ENCODE measurements at regions of chr1 and their contacts with region 1.

Region 1: DNA sequence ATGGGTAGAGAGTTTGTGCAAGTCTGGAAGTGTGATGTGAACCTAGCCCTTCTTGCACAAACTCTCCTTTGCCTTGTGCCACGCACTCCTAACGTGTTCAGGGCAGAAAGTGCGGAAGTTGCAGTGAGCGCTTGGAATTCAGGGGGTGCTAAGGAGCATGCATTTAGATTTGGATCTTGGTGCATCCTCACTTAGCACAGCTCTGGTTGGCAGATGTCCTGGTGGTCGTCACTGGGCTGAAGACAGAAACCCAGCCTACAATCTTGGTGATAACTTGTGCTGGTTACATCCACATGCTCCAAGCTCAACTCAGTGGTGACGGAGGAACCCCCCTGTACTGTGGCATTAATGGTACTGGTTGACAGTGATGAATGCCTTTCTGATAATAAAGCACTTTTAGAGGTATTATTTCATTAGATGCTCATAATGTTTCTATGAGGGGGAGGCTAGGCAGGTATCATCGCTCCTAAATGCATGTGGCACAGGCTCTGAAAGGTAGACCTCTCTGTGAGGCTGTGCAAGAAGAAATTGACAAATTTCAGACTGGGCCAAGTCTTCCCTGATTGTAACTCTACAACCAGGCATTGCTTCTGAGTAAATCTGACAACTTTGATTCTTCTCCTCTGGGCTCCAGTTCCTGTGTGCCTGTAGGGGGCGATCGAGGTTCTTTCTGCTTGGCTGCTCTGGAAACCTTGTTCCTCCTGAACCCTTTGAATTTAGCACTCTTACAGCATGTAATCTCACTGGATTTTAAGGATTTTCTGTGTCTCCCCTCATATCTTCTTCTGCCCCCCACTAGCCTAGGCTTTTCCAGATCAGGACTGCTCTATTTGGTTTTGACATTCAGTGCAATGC is 40.6 kb downstream of the MAPKAPK2 start:
- DNase-seq: peak; percentile 31
- H3K4me3 ChIP-seq: no peak overlapping the region
- H3K27ac ChIP-seq: no peak overlapping the region
- H3K4me1 ChIP-seq: no peaks in the 10 kb centered on the region
- H3K27me3 ChIP-seq: no peaks in the 10 kb centered on the region
- CTCF ChIP-seq: peak; percentile 64 to 71
- POLR2A ChIP-seq: no peak

Region 2: GRCh38 chr1:206684478-206685333 is 40.6 kb before region 1 on chr1 and contains the start of gene MAPKAPK2:
- CTCF ChIA-PET with region 1: no interaction called
- POLR2A ChIA-PET with region 1: no interaction called
- dilution Hi-C with region 1: no loop called
- intact Hi-C with region 1: loop called (anchors 2 kb)
- DNase-seq: peak; percentile 48
- H3K4me3 ChIP-seq: peak within 1 kb of the TSS; percentile 63 to 94 (median 93)
- H3K27ac ChIP-seq: peak within 1 kb of the TSS; percentile 85
- H3K4me1 ChIP-seq: peaks cover 28% of the 10 kb centered on the region
- H3K27me3 ChIP-seq: peaks cover 32 to 43% of the 10 kb centered on the region in 2 experiments
- CTCF ChIP-seq: no peak
- POLR2A ChIP-seq: no peak
- total RNA-seq, gene MAPKAPK2: 69.1 and 74.2 TPM in 2 replicates

Region 3: DNA sequence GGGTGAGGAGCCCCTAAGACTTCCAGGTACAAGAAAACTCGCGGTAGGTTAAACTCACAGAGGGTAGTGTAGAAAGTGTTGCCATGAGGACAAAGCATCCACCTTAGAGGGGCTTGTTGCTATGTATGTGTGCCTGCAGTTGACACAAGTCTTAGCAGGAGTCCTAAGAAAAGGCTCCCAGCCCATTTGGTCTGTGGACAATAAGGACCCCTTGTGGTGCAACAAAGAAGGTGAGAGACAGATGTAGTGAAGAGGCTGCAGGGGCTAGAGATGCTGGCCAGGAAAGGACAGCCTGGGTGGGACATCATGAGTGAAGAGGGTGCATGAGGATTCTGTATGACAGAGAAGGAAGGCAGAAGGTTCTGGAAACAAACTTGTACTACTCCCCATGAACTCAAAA is 83.3 kb after region 1 on chr1:
- CTCF ChIA-PET with region 1: interaction called, 3 read pairs
- POLR2A ChIA-PET with region 1: no interaction called
- dilution Hi-C with region 1: no loop called
- intact Hi-C with region 1: loop called (anchors 5 kb)
- DNase-seq: no peak
- H3K4me3 ChIP-seq: no peak overlapping the region
- H3K27ac ChIP-seq: no peak overlapping the region
- H3K4me1 ChIP-seq: no peaks in the 10 kb centered on the region
- H3K27me3 ChIP-seq: peaks cover 3 to 13% of the 10 kb centered on the region in 2 experiments
- CTCF ChIP-seq: peak in 1 of 2 donors; percentile 21
- POLR2A ChIP-seq: no peak

Region 4: GRCh38 chr1:206898089-206898912 is 173.0 kb after region 1 on chr1:
- CTCF ChIA-PET with region 1: no interaction called
- POLR2A ChIA-PET with region 1: no interaction called
- dilution Hi-C with region 1: no loop called
- intact Hi-C with region 1: no loop called
- DNase-seq: no peak
- H3K4me3 ChIP-seq: no peak overlapping the region
- H3K27ac ChIP-seq: no peak overlapping the region
- H3K4me1 ChIP-seq: no peaks in the 10 kb centered on the region
- H3K27me3 ChIP-seq: peaks cover 3 to 5% of the 10 kb centered on the region in 2 experiments
- CTCF ChIP-seq: no peak
- POLR2A ChIP-seq: no peak